ENCODE measurements at regions of chr17 and their contacts with region 1.

Region 1: GRCh38 chr17:21339011-21339410 is 37.1 kb upstream of the KCNJ12 start:
- DNase-seq: no peak
- ATAC-seq: no peak
- H3K4me3 ChIP-seq: no peak overlapping the region
- H3K27ac ChIP-seq: no peak overlapping the region
- H3K4me1 ChIP-seq: peaks cover 0 to 5% (median 0%) of the 10 kb centered on the region in 9 donors
- H3K27me3 ChIP-seq: no peaks in the 10 kb centered on the region
- CTCF ChIP-seq: no peak

Region 2: DNA sequence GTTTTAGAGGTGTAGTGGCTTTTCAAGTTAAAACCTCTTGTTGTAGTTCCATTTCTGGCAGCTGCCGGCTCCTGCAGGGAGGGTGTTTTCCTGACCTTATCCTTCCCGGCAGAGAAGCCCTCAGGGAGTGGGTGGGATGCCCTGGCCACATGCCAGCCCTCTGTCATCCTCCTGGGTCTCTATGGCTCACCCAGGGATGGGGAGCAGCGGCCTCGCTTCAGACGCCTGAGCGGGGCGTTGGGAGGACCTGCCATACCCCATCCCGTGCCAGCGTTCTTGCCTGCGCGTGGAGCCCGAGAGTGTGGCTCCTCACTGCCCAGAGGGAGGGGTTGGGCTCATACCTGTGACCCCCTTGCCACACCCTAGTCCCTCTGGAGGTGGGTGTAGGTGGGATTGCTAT is 49.1 kb after region 1 on chr17:
- intact Hi-C with region 1: loop called in 1 of 10 experiments (anchors 10 kb)
- DNase-seq: peak; percentile 36 to 66
- ATAC-seq: peak in 6 of 8 donors; percentile 30 to 82 (median 50)
- H3K4me3 ChIP-seq: no peak overlapping the region
- H3K27ac ChIP-seq: peak overlapping the region in 3 of 10 donors; percentile 35 to 40 (median 36)
- H3K4me1 ChIP-seq: peaks cover 1 to 17% (median 7%) of the 10 kb centered on the region in 9 donors
- H3K27me3 ChIP-seq: no peaks in the 10 kb centered on the region
- CTCF ChIP-seq: no peak